ENCODE measurements at regions of chr17 and their contacts with region 1.

Region 1: GRCh38 chr17:2070241-2071023 is 15.5 kb downstream of the HIC1 start:
- DNase-seq: peak in 1 of 5 donors; percentile 76
- H3K4me3 ChIP-seq: no peak overlapping the region
- H3K4me3 Mint-ChIP-seq: peak overlapping the region in 5 of 7 donors; percentile 44 to 69 (median 55)
- H3K27ac ChIP-seq: no peak overlapping the region
- H3K27ac Mint-ChIP-seq: peak overlapping the region; percentile 65 to 91 (median 84)
- H3K4me1 ChIP-seq: peaks cover 29% of the 10 kb centered on the region
- H3K4me1 Mint-ChIP-seq: peaks cover 33 to 67% (median 46%) of the 10 kb centered on the region in 3 donors
- H3K27me3 ChIP-seq: no peaks in the 10 kb centered on the region
- H3K27me3 Mint-ChIP-seq: no peaks in the 10 kb centered on the region

Region 2: GRCh38 chr17:1709971-1710806 is 360.2 kb before region 1 on chr17 and contains the start of gene TLCD2:
- CTCF ChIA-PET with region 1: no interaction called
- POLR2A ChIA-PET with region 1: no interaction called
- DNase-seq: peak in 2 of 5 donors; percentile 17 to 27
- H3K4me3 ChIP-seq: peak within 1 kb of the TSS; percentile 19
- H3K4me3 Mint-ChIP-seq: peak within 1 kb of the TSS; percentile 68 to 90 (median 73)
- H3K27ac ChIP-seq: peak within 1 kb of the TSS; percentile 2
- H3K27ac Mint-ChIP-seq: peak within 1 kb of the TSS in 7 of 8 donors; percentile 6 to 90 (median 55)
- H3K4me1 ChIP-seq: peaks cover 10% of the 10 kb centered on the region
- H3K4me1 Mint-ChIP-seq: peaks cover 18 to 33% (median 30%) of the 10 kb centered on the region in 3 donors
- H3K27me3 ChIP-seq: peaks cover 2% of the 10 kb centered on the region
- H3K27me3 Mint-ChIP-seq: peaks cover 17 to 21% of the 10 kb centered on the region in 2 donors
- total RNA-seq, gene TLCD2: 0.09 to 0.22 TPM

Region 3: GRCh38 chr17:1989135-1989534 is 81.3 kb before region 1 on chr17:
- CTCF ChIA-PET with region 1: no interaction called
- POLR2A ChIA-PET with region 1: no interaction called
- DNase-seq: no peak
- H3K4me3 ChIP-seq: no peak overlapping the region
- H3K4me3 Mint-ChIP-seq: no peak overlapping the region
- H3K27ac ChIP-seq: no peak overlapping the region
- H3K27ac Mint-ChIP-seq: peak overlapping the region in 1 of 8 donors; percentile 69
- H3K4me1 ChIP-seq: no peaks in the 10 kb centered on the region
- H3K4me1 Mint-ChIP-seq: no peaks in the 10 kb centered on the region
- H3K27me3 ChIP-seq: no peaks in the 10 kb centered on the region
- H3K27me3 Mint-ChIP-seq: peaks cover 8% of the 10 kb centered on the region in 2 donors

Region 4: DNA sequence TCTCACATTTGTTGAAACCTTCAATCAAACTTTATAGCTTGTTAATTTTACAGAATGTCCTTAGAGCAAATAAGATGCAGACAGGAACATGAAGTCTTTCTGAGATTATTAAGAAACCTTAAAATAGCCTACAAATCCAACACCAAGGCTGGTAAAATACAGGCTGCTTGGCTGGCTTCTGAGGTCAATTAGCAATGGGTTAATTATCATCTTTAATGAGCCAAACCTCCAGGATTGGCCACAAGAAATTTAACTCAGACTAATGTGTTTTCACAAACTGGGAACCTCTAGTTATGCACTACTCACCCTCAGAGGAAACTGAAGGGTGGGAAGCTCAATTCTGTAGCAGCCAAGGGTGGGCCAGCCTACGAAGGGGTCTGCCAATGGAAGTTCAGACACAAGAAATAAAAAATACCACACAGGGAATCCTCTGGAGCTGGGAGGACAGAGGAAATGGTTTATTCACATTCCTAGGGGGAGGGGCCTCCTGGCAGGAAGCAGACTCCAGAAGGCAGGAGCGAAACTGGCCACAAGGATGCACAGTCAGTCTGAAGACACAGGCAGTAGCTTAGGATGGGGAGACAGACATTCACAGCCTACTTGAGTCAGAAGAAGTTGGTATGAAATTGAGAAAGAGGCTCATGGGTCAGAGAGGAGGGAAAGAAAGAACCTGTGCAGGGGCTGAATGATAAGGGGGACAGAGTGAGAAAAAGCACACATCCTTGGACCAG is 20.5 kb after region 1 on chr17:
- CTCF ChIA-PET with region 1: interaction called, 14 read pairs
- POLR2A ChIA-PET with region 1: interaction called, 7 read pairs
- DNase-seq: no peak
- H3K4me3 ChIP-seq: no peak overlapping the region
- H3K4me3 Mint-ChIP-seq: peak overlapping the region in 6 of 7 donors; percentile 22 to 97 (median 92)
- H3K27ac ChIP-seq: no peak overlapping the region
- H3K27ac Mint-ChIP-seq: peak overlapping the region; percentile 12 to 99 (median 96)
- H3K4me1 ChIP-seq: peaks cover 39% of the 10 kb centered on the region
- H3K4me1 Mint-ChIP-seq: peaks cover 43 to 67% (median 55%) of the 10 kb centered on the region in 3 donors
- H3K27me3 ChIP-seq: no peaks in the 10 kb centered on the region
- H3K27me3 Mint-ChIP-seq: no peaks in the 10 kb centered on the region

Region 5: DNA sequence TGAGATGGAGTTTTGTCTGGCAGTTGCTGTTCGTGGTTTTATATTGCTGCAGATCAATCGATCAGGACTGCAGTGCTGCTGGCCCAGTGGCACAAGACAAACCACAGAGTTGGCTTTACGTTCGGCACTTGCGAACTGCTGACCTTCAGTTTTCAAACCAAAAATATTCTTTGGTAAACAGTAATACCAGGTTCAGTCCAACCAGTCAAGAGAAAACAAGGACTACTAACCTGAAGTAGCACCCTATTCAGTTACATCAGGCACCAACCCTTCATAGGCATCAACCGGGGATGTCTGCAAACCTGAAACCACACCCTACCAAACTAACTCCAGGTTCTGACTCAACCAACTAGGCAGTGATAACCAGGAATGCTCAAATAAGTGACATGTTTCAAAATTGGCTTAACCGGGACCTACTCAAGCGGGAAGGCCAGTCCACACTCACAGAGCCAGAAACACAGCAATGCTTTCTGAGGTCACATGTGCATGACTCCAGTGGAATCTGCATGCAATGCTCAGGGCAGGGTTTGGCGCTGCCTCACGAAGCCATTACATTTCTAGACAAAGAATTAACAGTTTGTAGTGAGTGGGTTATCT is 142.1 kb after region 1 on chr17:
- CTCF ChIA-PET with region 1: no interaction called
- POLR2A ChIA-PET with region 1: no interaction called
- DNase-seq: no peak
- H3K4me3 ChIP-seq: no peak overlapping the region
- H3K4me3 Mint-ChIP-seq: peak overlapping the region in 4 of 7 donors; percentile 33 to 70 (median 53)
- H3K27ac ChIP-seq: no peak overlapping the region
- H3K27ac Mint-ChIP-seq: peak overlapping the region; percentile 64 to 100 (median 94)
- H3K4me1 ChIP-seq: peaks cover 66% of the 10 kb centered on the region
- H3K4me1 Mint-ChIP-seq: peaks cover 48 to 67% (median 59%) of the 10 kb centered on the region in 3 donors
- H3K27me3 ChIP-seq: no peaks in the 10 kb centered on the region
- H3K27me3 Mint-ChIP-seq: no peaks in the 10 kb centered on the region